Mammary epithelial cell (primary cell): ENCODE measurements at regions of chr2 and their contacts with region 1.

Region 1: DNA sequence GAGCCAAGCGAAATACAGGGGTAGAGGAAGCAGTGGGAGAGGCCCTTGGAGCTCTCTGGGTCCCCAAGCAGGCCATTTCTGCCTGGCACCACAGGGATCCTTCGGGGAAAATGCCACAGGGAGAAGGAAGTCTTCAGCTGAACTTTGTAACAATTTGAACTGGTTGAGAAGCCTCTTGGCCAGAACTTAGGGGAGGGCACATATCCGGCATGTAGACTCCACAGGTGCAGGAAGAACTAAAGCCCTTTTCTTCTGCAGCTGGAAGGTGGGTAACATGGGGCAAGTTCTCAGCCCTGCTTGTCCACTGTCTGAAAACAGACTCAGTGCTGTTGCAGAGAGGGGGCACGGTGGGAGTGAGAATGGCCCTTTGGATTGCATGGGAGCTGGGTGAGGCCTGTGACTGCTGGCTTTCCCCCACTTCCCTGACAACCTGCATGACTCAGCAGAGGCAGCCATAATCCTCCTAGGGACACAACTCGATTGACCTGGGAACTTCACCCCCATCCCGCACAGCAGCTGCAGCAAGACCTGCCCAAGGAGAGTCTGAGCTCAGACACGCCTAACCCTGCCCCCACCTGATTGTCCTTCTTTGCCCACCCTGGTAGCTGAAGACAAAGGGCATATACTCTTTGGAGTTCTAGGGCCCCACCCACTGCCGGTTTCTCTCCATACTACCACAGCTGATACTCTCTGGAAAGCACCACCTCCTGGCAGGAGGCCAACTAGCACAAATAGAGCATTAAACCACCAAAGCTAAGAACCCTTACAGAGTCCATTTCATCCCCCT is 101.6 kb upstream of the FAM136A start:
- DNase-seq: no peak
- H3K4me3 ChIP-seq: no peak overlapping the region
- H3K27ac ChIP-seq: no peak overlapping the region
- H3K4me1 ChIP-seq: peaks cover 3% of the 10 kb centered on the region
- H3K27me3 ChIP-seq: no peaks in the 10 kb centered on the region
- CTCF ChIP-seq: no peak

Region 2: GRCh38 chr2:70357684-70358071 is 45.8 kb before region 1 on chr2:
- CTCF ChIA-PET with region 1: no interaction called
- dilution Hi-C with region 1: no loop called
- in situ Hi-C with region 1: no loop called
- intact Hi-C with region 1: no loop called
- DNase-seq: no peak
- H3K4me3 ChIP-seq: no peak overlapping the region
- H3K27ac ChIP-seq: no peak overlapping the region
- H3K4me1 ChIP-seq: peaks cover 34% of the 10 kb centered on the region
- H3K27me3 ChIP-seq: no peaks in the 10 kb centered on the region
- CTCF ChIP-seq: no peak

Region 3: DNA sequence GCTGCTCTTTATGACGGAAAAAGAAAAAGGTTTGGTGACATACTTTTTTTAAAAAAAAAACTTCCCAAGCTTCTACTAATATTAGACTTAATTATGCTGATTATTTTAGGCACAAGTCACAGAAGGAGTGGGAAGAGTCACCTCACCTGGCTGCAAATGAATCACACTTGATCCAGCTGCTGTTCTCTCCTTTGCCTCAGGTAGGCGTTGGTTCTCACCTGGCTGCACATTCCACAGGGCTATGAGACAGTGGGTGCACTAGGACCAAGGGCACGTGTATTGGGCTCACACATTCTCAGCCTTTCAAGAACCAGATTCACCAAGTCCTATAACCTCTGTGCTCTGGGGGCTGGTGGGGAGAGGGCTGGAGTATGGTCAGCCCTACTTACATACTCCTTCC is 56.9 kb after region 1 on chr2:
- CTCF ChIA-PET with region 1: no interaction called
- dilution Hi-C with region 1: loop called (anchors 5 kb)
- in situ Hi-C with region 1: no loop called
- intact Hi-C with region 1: no loop called
- DNase-seq: peak; percentile 24
- H3K4me3 ChIP-seq: no peak overlapping the region
- H3K27ac ChIP-seq: no peak overlapping the region
- H3K4me1 ChIP-seq: peaks cover 6% of the 10 kb centered on the region
- H3K27me3 ChIP-seq: no peaks in the 10 kb centered on the region
- CTCF ChIP-seq: peak; percentile 51 to 58